RWPE1 (cell line): ENCODE measurements at regions of chr19 and their contacts with region 1.

Region 1: GRCh38 chr19:1811472-1812218 is 431 bp downstream of the ATP8B3 start:
- DNase-seq: peak; percentile 91
- H3K27ac ChIP-seq: peak overlapping the region; percentile 93
- CTCF ChIP-seq: peak; percentile 38; the same call in 1 of the 2 replicates

Region 2: DNA sequence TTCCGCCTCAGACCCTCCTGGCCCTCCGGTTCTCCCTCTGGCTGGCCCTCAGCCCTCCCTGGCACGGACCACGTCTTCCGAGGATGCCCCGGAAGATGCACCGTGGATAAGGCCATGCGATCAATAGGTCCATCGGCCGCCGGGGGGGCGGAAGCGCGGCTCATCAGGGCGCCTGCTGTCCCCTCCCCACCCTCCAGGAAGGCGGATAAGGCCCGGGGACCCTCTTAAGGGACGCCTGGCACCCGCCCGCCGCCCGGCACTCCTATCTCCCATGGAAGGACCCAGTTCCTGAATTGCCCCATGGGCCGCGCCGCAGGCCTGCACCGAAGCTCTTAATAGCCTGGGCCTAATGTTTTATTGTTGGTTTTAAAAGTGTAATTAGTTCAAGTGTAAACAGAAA is 113.0 kb before region 1 on chr19:
- CTCF ChIA-PET with region 1: no interaction called
- POLR2A ChIA-PET with region 1: interaction called, 11 read pairs
- DNase-seq: no peak
- H3K27ac ChIP-seq: no peak overlapping the region
- CTCF ChIP-seq: no peak

Region 3: DNA sequence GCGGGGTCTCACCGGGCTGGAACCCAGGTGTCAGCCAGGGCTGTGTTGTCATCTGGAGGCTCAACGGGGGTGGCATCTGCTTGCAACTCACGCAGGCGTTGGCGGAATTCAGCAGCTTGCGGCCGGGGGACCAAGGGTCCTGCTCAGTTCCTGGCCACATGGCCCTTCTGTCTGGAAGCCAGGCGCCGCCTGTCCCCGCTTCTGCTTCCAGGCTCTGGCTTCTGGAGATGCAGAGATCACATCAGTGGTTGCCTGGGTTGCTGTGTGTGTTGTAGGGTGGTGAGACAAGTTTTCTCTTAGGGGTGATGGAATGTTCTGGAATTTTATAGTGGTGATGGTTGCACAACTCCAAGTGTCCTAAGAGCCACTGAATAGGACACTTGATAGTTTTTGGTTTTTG is 98.5 kb after region 1 on chr19:
- CTCF ChIA-PET with region 1: no interaction called
- POLR2A ChIA-PET with region 1: no interaction called
- DNase-seq: no peak
- H3K27ac ChIP-seq: peak overlapping the region; percentile 83
- CTCF ChIP-seq: no peak